Heart left ventricle (tissue), 16 donors: ENCODE measurements at regions of chr5 and their contacts with region 1.

Region 1: GRCh38 chr5:104635227-104635626 is 1072.6 kb upstream of the NUDT12 start:
- DNase-seq: no peak
- ATAC-seq: no peak
- H3K4me3 ChIP-seq: no peak overlapping the region
- H3K27ac ChIP-seq: no peak overlapping the region
- H3K4me1 ChIP-seq: no peaks in the 10 kb centered on the region
- H3K27me3 ChIP-seq: no peaks in the 10 kb centered on the region
- CTCF ChIP-seq: no peak
- POLR2A ChIP-seq: no peak

Region 2: GRCh38 chr5:104443706-104444105 is 191.5 kb before region 1 on chr5:
- intact Hi-C with region 1: loop called in 1 of 10 experiments (anchors 5 kb)
- DNase-seq: peak in 1 of 5 donors; percentile 25
- ATAC-seq: no peak
- H3K4me3 ChIP-seq: no peak overlapping the region
- H3K27ac ChIP-seq: no peak overlapping the region
- H3K4me1 ChIP-seq: no peaks in the 10 kb centered on the region
- H3K27me3 ChIP-seq: no peaks in the 10 kb centered on the region
- CTCF ChIP-seq: no peak
- POLR2A ChIP-seq: no peak

Region 3: DNA sequence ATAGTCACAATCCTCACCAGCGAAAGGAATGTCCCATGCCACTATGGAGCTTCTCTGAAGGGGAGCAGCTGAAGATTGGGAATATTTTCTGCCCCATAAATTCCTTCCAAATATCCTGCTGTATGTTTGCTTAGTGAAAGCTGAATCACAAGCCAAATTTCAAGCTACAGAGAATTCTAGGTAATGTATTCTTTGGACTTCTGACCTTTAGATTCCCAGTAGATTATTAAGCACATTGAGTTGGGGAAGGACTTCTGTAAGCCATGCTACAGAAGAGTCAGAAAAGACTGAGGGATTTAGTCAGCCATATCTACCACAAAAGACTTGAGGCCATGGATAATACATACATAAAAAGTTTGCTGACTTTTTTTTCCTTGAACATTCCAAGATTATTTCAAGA is 269.3 kb after region 1 on chr5:
- intact Hi-C with region 1: no loop called
- DNase-seq: no peak
- ATAC-seq: no peak
- H3K4me3 ChIP-seq: no peak overlapping the region
- H3K27ac ChIP-seq: no peak overlapping the region
- H3K4me1 ChIP-seq: no peaks in the 10 kb centered on the region
- H3K27me3 ChIP-seq: no peaks in the 10 kb centered on the region
- CTCF ChIP-seq: no peak
- POLR2A ChIP-seq: no peak